Activated T-helper 1 cell treated with anti-CD3 and anti-CD28 coated beads, Interleukin-12 subunit alpha, Interleukin-12 subunit beta, Interleukin-2, Interleukin-4 antibody, amounts not matched to agents 30 ng/mL and 10 ng/mL and 1 ng/mL, durations not matched to agents 14 hours and 24 hours and 36 hours (primary cell): ENCODE measurements at regions of chr17 and their contacts with region 1.

Region 1: DNA sequence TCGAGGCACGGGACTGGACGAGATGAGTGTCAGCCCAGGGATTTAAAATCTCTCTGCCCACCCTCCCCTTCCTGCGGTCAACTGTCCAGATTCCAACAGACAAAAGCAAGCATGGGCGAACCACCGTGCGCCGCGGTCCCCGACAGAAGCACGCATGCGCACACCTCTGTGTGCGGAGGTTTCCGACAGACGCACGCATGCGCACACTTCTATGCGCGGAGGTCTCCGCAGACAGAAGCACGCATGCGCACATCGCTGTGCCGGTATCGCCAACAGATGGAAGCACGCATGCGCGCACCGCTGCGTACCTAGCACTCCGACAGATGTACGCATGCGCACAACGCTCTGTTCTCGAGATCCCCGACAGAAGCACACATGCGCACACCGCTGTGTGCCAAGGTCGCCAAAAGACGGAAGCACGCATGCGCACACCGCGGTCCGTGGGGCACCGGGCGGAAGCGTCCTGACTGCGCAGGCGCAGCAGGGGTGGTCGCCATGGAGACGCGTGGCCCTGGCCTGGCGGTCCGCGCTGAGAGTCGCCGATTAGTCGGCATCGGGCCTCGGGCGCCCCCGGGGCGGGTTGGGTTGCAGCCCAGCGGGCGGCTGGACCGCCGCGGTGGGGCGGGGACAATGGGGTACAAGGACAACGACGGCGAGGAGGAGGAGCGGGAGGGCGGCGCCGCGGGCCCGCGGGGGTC is 57.4 kb upstream of the RPH3AL start:
- DNase-seq: peak; percentile 99
- H3K4me3 Mint-ChIP-seq: peak overlapping the region; percentile 95
- H3K27ac Mint-ChIP-seq: peak overlapping the region; percentile 89
- H3K4me1 Mint-ChIP-seq: peaks cover 57% of the 10 kb centered on the region
- H3K27me3 Mint-ChIP-seq: peaks cover 7% of the 10 kb centered on the region

Region 2: GRCh38 chr17:233473-233941 is 176.5 kb before region 1 on chr17:
- intact Hi-C with region 1: no loop called
- DNase-seq: no peak
- H3K4me3 Mint-ChIP-seq: no peak overlapping the region
- H3K27ac Mint-ChIP-seq: no peak overlapping the region
- H3K4me1 Mint-ChIP-seq: peaks cover 6% of the 10 kb centered on the region
- H3K27me3 Mint-ChIP-seq: peaks cover 2% of the 10 kb centered on the region

Region 3: DNA sequence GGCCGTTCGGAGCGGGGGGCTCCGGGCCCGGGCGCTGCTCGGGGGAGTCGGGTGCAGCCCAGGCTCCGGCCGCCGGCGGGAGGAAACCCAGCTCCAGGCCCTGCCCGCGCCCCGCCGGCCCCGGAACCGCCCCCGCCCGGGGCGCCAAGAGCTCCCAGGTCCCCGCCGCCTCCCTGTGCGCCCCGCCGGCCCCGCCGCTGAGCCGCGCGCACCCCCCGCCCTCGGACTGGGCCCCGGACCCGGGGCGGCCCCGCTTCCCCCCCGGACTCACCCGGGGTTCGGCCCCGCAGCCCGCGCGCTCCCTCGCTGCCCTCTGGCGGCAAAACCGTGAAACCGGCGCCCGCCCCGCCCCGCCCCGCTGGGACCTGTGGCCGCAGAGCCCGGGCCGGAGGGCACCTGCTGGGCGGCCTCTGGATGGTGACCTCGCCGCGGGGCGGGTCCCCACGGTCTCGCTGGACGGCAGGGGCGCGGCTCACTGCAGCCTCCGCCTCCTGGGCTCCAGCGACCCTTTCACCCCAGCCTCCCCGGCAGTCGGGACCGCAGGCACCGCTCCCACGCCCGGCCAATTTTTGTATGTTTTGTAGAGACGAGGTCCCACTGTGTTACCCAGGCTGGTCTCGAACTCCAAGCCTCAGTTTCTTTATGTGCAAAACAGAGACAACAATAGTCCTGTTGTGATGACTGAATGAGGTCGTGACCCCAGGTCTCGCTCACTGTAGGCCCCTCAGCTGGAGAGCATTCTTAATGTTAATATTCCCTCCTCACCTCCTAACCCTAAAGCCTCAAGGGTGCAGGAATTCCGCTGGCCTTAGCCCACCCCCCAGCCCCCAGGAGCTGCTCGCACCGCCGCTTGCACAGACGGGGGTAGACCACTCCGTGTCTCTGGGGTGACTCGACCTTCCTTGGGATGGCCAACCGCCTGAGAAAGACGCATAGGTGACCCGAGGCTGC is 23.8 kb before region 1 on chr17:
- intact Hi-C with region 1: loop called (anchors 1 kb)
- DNase-seq: peak; percentile 46
- H3K4me3 Mint-ChIP-seq: peak overlapping the region; percentile 86
- H3K27ac Mint-ChIP-seq: peak overlapping the region; percentile 11
- H3K4me1 Mint-ChIP-seq: peaks cover 10% of the 10 kb centered on the region
- H3K27me3 Mint-ChIP-seq: peaks cover 29% of the 10 kb centered on the region

Region 4: GRCh38 chr17:559551-560431 is 149.8 kb after region 1 on chr17:
- intact Hi-C with region 1: loop called (anchors 2 kb)
- DNase-seq: no peak
- H3K4me3 Mint-ChIP-seq: no peak overlapping the region
- H3K27ac Mint-ChIP-seq: peak overlapping the region; percentile 70
- H3K4me1 Mint-ChIP-seq: peaks cover 28% of the 10 kb centered on the region
- H3K27me3 Mint-ChIP-seq: no peaks in the 10 kb centered on the region

Region 5: DNA sequence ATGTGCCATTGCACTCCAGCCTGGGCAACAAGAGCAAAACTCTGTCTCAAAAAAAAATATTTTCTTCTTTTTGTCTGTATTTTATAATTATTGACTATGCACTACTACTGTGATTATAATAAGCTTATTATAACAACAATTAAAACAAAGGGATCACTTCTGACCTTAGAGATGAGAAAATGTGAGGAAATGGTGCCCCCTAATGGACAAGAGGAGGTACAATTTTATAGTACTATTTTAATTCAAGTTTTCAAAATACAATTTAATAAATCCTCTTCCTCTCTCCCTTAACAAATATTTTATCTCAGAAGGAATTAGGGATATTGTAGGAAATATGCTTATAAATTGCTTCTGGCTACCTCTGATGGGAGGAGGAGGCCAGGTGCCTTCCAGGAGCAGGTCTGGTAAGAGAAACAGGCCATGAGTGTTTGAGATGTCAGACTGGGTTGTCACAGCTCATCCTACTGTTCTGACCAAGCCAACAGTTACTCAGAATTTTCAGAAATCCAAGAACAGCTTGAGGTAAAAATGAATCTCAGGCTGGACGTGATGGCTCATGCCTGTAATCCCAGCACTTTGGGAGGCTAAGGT is 290.6 kb after region 1 on chr17:
- intact Hi-C with region 1: loop called (anchors 1 kb)
- DNase-seq: no peak
- H3K4me3 Mint-ChIP-seq: no peak overlapping the region
- H3K27ac Mint-ChIP-seq: no peak overlapping the region
- H3K4me1 Mint-ChIP-seq: no peaks in the 10 kb centered on the region
- H3K27me3 Mint-ChIP-seq: no peaks in the 10 kb centered on the region

Region 6: DNA sequence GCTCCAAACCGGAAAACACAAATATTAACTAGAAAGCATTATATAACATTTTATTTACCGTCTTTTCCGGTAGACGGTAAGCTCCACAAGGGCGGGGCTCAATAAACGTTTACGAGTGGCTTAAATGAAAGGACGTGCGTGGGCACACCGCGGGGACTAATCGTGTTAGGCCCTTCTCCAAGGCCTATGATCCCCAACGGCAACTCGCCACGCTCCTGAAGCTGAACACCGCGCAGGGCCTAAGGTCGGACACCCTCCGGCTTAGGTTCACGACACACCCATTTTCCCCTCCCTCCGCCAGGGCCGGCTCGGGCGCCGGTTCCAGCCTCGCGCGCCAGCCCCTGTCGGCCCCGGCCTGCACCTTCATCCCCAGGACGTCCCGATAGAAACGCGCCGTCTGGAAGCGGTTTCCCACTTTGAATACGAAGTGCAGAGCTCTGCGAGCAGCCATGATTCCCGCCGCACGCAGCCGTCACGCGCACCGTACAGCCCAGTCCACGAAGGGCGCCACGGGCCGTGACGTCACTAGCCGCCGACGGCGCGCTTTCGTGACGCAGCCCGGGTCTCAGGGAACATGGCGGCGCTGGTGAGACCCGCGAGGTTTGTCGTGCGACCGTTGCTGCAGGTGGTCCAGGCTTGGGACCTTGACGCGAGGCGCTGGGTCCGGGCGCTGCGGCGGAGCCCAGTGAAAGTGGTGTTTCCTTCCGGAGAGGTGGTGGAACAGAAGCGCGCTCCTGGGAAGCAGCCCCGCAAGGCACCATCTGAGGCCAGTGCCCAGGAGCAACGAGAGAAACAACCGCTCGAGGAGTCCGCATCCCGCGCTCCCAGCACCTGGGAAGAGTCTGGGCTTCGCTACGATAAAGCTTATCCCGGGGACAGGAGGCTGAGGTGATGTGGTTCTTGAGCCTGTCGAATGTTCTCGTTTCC is 372.1 kb after region 1 on chr17 and contains the starts of genes GLOD4 and MRM3:
- intact Hi-C with region 1: loop called (anchors 2 kb)
- DNase-seq: peak; percentile 94
- H3K4me3 Mint-ChIP-seq: peak within 1 kb of the TSS; percentile 97
- H3K27ac Mint-ChIP-seq: peak within 1 kb of the TSS; percentile 97
- H3K4me1 Mint-ChIP-seq: peaks cover 37% of the 10 kb centered on the region
- H3K27me3 Mint-ChIP-seq: no peaks in the 10 kb centered on the region
- total RNA-seq, gene GLOD4: 97.0 and 97.6 TPM in 2 replicates
- total RNA-seq, gene MRM3: 31.7 and 32.0 TPM in 2 replicates